CD8-positive, alpha-beta T cell (primary cell): ENCODE measurements at regions of chr3 and their contacts with region 1.

Region 1: GRCh38 chr3:111967651-111968274 is 11.1 kb upstream of the ABHD10 start:
- DNase-seq: peak; percentile 55 to 85 (median 80)
- ATAC-seq: peak; percentile 95
- H3K4me3 ChIP-seq: no peak overlapping the region
- H3K4me3 Mint-ChIP-seq: no peak overlapping the region
- H3K27ac ChIP-seq: no peak overlapping the region
- H3K27ac Mint-ChIP-seq: no peak overlapping the region
- H3K4me1 ChIP-seq: no peaks in the 10 kb centered on the region
- H3K4me1 Mint-ChIP-seq: peaks cover 3% of the 10 kb centered on the region
- H3K27me3 ChIP-seq: no peaks in the 10 kb centered on the region
- H3K27me3 Mint-ChIP-seq: no peaks in the 10 kb centered on the region
- CTCF ChIP-seq: peak; percentile 92

Region 2: DNA sequence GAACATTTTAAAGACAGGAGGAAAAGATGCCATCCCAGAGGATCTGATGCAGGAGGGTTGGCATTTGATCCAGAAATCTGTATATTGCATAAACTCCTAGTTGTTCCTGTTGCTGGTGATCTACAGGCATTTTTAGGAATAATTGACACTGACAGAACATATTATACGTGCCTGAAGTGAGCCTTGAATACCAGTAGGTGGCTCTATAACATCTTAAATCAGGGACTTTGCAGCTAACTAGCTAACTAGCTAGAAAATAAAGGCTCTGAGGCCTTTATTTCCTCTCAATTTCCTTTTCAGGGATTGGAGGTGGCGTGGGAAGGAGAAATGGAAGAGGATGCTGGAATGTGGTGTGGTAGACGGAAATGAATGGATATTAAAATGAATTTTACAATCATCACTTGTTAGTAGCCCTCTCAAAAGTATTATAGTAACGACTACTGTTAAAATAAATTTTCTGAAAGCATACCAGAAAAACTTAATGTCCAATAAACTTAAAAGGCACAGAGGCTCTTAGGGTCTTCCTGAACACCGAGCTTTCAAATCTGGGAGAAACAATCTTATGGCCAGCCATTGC is 298.8 kb before region 1 on chr3:
- CTCF ChIA-PET with region 1: no interaction called
- POLR2A ChIA-PET with region 1: no interaction called
- intact Hi-C with region 1: loop called (anchors 1 kb)
- DNase-seq: peak in 2 of 9 experiments; percentile 59 to 75
- ATAC-seq: peak; percentile 36
- H3K4me3 ChIP-seq: no peak overlapping the region
- H3K4me3 Mint-ChIP-seq: peak overlapping the region; percentile 16
- H3K27ac ChIP-seq: peak overlapping the region in 1 of 2 experiments; percentile 89
- H3K27ac Mint-ChIP-seq: peak overlapping the region; percentile 70
- H3K4me1 ChIP-seq: peaks cover 54% of the 10 kb centered on the region
- H3K4me1 Mint-ChIP-seq: peaks cover 78% of the 10 kb centered on the region
- H3K27me3 ChIP-seq: no peaks in the 10 kb centered on the region
- H3K27me3 Mint-ChIP-seq: no peaks in the 10 kb centered on the region
- CTCF ChIP-seq: peak; percentile 88

Region 3: GRCh38 chr3:111859974-111860859 is 107.5 kb before region 1 on chr3:
- CTCF ChIA-PET with region 1: interaction called, 4 read pairs
- POLR2A ChIA-PET with region 1: interaction called, 3 read pairs
- intact Hi-C with region 1: loop called (anchors 1 to 5 kb)
- DNase-seq: peak; percentile 10 to 86 (median 48)
- ATAC-seq: peak; percentile 39
- H3K4me3 ChIP-seq: peak overlapping the region; percentile 75 to 83
- H3K4me3 Mint-ChIP-seq: peak overlapping the region; percentile 95
- H3K27ac ChIP-seq: peak overlapping the region; percentile 40 to 76
- H3K27ac Mint-ChIP-seq: peak overlapping the region; percentile 85
- H3K4me1 ChIP-seq: peaks cover 8% of the 10 kb centered on the region
- H3K4me1 Mint-ChIP-seq: peaks cover 18% of the 10 kb centered on the region
- H3K27me3 ChIP-seq: no peaks in the 10 kb centered on the region
- H3K27me3 Mint-ChIP-seq: peaks cover 17% of the 10 kb centered on the region
- CTCF ChIP-seq: no peak

Region 4: DNA sequence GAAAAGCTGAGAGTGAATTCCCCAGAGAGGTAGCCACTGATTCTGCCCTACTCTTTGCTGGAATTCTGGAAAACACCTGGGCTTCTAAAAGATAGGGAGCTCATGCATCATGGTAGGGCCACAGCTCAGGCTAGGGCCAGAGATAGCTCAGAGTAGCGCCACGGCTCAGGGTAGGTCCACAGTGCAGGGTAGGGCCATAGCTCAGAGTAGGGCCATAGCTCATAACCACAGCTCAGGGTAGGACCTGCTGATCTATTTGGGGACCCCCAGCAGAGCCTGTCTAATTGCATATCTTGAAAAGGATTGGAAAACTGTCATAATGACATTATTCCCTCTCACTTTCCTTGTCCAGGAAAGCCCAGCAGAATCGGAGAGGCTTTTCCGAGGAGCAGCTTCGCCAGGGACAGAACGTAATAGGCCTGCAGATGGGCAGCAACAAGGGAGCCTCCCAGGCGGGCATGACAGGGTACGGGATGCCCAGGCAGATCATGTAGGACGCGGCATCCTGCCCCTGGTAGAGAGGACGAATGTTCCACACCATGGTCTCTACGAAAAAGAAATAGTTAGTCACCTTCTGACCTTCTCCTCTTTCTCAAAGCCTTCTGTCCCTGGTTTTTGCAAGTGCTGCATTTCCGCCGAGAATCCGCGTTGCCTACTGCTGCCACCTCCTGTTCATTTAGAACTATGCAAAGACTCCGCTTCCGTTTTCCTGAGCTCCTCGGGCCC is 45.5 kb after region 1 on chr3:
- CTCF ChIA-PET with region 1: interaction called, 31 read pairs
- POLR2A ChIA-PET with region 1: no interaction called
- intact Hi-C with region 1: loop called in 1 of 2 experiments (anchors 1 kb)
- DNase-seq: peak; percentile 9 to 72 (median 51)
- ATAC-seq: peak; percentile 79
- H3K4me3 ChIP-seq: no peak overlapping the region
- H3K4me3 Mint-ChIP-seq: no peak overlapping the region
- H3K27ac ChIP-seq: no peak overlapping the region
- H3K27ac Mint-ChIP-seq: no peak overlapping the region
- H3K4me1 ChIP-seq: peaks cover 2% of the 10 kb centered on the region
- H3K4me1 Mint-ChIP-seq: peaks cover 6% of the 10 kb centered on the region
- H3K27me3 ChIP-seq: no peaks in the 10 kb centered on the region
- H3K27me3 Mint-ChIP-seq: no peaks in the 10 kb centered on the region
- CTCF ChIP-seq: peak; percentile 69